Mammary epithelial cell (primary cell): ENCODE measurements at regions of chr21 and their contacts with region 1.

Region 1: GRCh38 chr21:35616090-35616489 is 444.2 kb downstream of the SETD4 start:
- DNase-seq: peak; percentile 40
- H3K4me3 ChIP-seq: no peak overlapping the region
- H3K27ac ChIP-seq: peak overlapping the region; percentile 25
- H3K4me1 ChIP-seq: peaks cover 54% of the 10 kb centered on the region
- H3K27me3 ChIP-seq: no peaks in the 10 kb centered on the region
- CTCF ChIP-seq: peak; percentile 50 to 59

Region 2: GRCh38 chr21:34812504-34813265 is 803.4 kb before region 1 on chr21:
- CTCF ChIA-PET with region 1: no interaction called
- dilution Hi-C with region 1: no loop called
- in situ Hi-C with region 1: no loop called
- intact Hi-C with region 1: loop called (anchors 10 kb)
- DNase-seq: peak; percentile 81
- H3K4me3 ChIP-seq: no peak overlapping the region
- H3K27ac ChIP-seq: peak overlapping the region; percentile 94
- H3K4me1 ChIP-seq: peaks cover 98% of the 10 kb centered on the region
- H3K27me3 ChIP-seq: no peaks in the 10 kb centered on the region
- CTCF ChIP-seq: no peak

Region 3: GRCh38 chr21:35256467-35256988 is 359.6 kb before region 1 on chr21:
- CTCF ChIA-PET with region 1: no interaction called
- dilution Hi-C with region 1: no loop called
- in situ Hi-C with region 1: no loop called
- intact Hi-C with region 1: loop called (anchors 10 kb)
- DNase-seq: peak; percentile 99
- H3K4me3 ChIP-seq: peak overlapping the region; percentile 3 to 31 (median 7)
- H3K27ac ChIP-seq: peak overlapping the region; percentile 98
- H3K4me1 ChIP-seq: peaks cover 17% of the 10 kb centered on the region
- H3K27me3 ChIP-seq: no peaks in the 10 kb centered on the region
- CTCF ChIP-seq: peak in 1 of 2 donors; percentile 16

Region 4: GRCh38 chr21:35438643-35439404 is 177.3 kb before region 1 on chr21:
- CTCF ChIA-PET with region 1: no interaction called
- dilution Hi-C with region 1: no loop called
- in situ Hi-C with region 1: no loop called
- intact Hi-C with region 1: loop called (anchors 10 kb)
- DNase-seq: peak; percentile 55
- H3K4me3 ChIP-seq: no peak overlapping the region
- H3K27ac ChIP-seq: no peak overlapping the region
- H3K4me1 ChIP-seq: no peaks in the 10 kb centered on the region
- H3K27me3 ChIP-seq: no peaks in the 10 kb centered on the region
- CTCF ChIP-seq: no peak

Region 5: DNA sequence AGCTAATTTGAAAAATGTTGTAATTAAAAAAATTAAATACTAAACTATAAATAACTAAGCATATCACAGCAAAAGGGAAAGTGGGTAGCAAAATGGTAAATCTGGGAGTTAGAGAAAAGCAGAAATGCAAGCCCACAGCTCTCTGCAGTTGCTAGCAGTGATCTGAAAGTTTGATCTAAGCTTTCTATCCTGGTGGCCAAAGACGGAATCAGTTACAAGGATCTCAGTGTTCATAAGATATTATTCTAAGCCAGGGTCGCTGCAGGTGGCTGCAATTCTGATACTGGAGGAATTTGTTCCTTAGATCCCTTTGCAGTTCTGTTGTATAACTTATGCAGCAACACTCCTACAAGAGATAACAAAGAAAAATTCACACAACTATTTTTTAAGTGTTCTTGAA is 80.6 kb after region 1 on chr21:
- CTCF ChIA-PET with region 1: no interaction called
- dilution Hi-C with region 1: no loop called
- in situ Hi-C with region 1: no loop called
- intact Hi-C with region 1: no loop called
- DNase-seq: no peak
- H3K4me3 ChIP-seq: no peak overlapping the region
- H3K27ac ChIP-seq: no peak overlapping the region
- H3K4me1 ChIP-seq: no peaks in the 10 kb centered on the region
- H3K27me3 ChIP-seq: no peaks in the 10 kb centered on the region
- CTCF ChIP-seq: no peak

Region 6: GRCh38 chr21:35768187-35768586 is 152.1 kb after region 1 on chr21:
- CTCF ChIA-PET with region 1: no interaction called
- dilution Hi-C with region 1: no loop called
- in situ Hi-C with region 1: no loop called
- intact Hi-C with region 1: no loop called
- DNase-seq: no peak
- H3K4me3 ChIP-seq: no peak overlapping the region
- H3K27ac ChIP-seq: no peak overlapping the region
- H3K4me1 ChIP-seq: peaks cover 8% of the 10 kb centered on the region
- H3K27me3 ChIP-seq: no peaks in the 10 kb centered on the region
- CTCF ChIP-seq: no peak

Region 7: GRCh38 chr21:35840197-35840799 is 224.2 kb after region 1 on chr21:
- CTCF ChIA-PET with region 1: no interaction called
- dilution Hi-C with region 1: no loop called
- in situ Hi-C with region 1: no loop called
- intact Hi-C with region 1: no loop called
- DNase-seq: peak; percentile 59
- H3K4me3 ChIP-seq: no peak overlapping the region
- H3K27ac ChIP-seq: no peak overlapping the region
- H3K4me1 ChIP-seq: peaks cover 2% of the 10 kb centered on the region
- H3K27me3 ChIP-seq: no peaks in the 10 kb centered on the region
- CTCF ChIP-seq: peak; percentile 85 to 92

Region 8: GRCh38 chr21:36028127-36029069 is 412.3 kb after region 1 on chr21:
- CTCF ChIA-PET with region 1: no interaction called
- dilution Hi-C with region 1: no loop called
- in situ Hi-C with region 1: no loop called
- intact Hi-C with region 1: loop called (anchors 5 kb)
- DNase-seq: peak; percentile 70
- H3K4me3 ChIP-seq: no peak overlapping the region
- H3K27ac ChIP-seq: no peak overlapping the region
- H3K4me1 ChIP-seq: peaks cover 11% of the 10 kb centered on the region
- H3K27me3 ChIP-seq: no peaks in the 10 kb centered on the region
- CTCF ChIP-seq: peak; percentile 96 to 97